ENCODE measurements at regions of chr15 and their contacts with region 1.

Region 1: GRCh38 chr15:90946538-90946937 is 8.1 kb upstream of the RCCD1 start:
- DNase-seq: no peak
- ATAC-seq: no peak
- H3K4me3 Mint-ChIP-seq: no peak overlapping the region
- H3K27ac Mint-ChIP-seq: no peak overlapping the region
- H3K4me1 Mint-ChIP-seq: no peaks in the 10 kb centered on the region
- H3K27me3 Mint-ChIP-seq: no peaks in the 10 kb centered on the region
- CTCF ChIP-seq: no peak

Region 2: DNA sequence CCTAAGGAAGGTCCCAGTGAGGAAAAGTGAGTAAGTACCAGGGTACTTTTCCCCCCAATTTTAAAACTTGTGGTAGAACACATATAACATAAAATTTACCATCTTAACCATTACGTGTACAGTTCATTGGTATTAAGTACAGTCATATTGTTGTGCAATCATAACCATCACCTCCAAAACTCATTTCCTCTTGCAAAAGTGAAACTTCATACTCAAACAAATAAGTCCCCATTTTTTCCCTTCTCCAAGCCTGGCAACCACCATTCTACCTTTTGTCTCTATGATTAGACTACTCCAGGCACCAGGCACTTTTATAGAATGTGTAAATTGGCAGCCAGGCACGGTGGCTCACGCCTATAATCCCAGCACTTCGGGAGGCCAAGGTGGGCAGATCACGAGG is 35.6 kb after region 1 on chr15:
- CTCF ChIA-PET with region 1: no interaction called
- POLR2A ChIA-PET with region 1: interaction called, 11 read pairs
- intact Hi-C with region 1: no loop called
- DNase-seq: no peak
- ATAC-seq: peak; percentile 43
- H3K4me3 Mint-ChIP-seq: peak overlapping the region; percentile 21
- H3K27ac Mint-ChIP-seq: peak overlapping the region; percentile 77
- H3K4me1 Mint-ChIP-seq: peaks cover 32% of the 10 kb centered on the region
- H3K27me3 Mint-ChIP-seq: no peaks in the 10 kb centered on the region
- CTCF ChIP-seq: no peak